ENCODE measurements at regions of chr17 and their contacts with region 1.

Region 1: DNA sequence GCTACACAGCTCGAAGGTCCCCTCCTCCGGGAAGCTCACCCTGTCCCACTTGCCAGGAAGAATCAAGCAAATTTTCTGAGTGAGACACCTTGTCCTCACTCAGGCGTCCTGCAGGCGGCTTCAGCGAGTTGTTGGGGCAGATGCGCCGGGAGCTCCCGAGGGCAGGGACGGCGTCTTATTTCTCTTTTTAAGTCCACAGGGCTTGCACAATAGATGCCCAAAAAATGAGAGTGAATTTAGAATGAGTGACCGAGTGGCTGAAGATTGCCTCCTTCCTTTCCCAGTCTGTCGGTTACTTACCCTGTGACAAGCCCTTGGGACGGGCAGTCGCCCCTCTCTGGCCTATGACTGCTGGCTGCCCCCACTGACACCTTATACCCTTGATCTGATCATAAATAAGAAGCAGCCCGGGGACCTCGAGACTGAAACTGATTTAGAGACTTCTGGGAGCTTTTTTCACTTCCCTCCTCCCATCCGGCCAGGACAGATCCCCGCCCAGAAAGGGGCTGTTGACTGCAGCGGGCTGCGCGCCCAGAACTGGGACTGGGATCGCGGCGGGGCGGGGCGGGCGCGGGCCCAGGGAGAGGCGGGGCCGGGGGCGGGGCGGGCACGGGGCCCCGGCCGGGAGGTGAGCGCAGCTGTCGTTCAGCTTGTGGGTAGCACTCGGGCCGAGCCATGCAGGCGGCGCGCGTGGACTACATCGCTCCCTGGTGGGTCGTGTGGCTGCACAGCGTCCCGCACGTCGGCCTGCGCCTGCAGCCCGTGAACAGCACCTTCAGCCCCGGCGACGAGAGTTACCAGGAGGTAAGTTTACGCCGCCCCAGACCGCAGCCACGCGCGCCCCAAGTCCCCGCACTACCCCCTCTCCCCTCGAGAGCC is at the start of gene TTYH2:
- DNase-seq: peak; percentile 90 to 94
- H3K4me3 ChIP-seq: peak within 1 kb of the TSS in 2 of 3 donors; percentile 50 to 70
- H3K27ac ChIP-seq: peak within 1 kb of the TSS; percentile 61 to 81 (median 74)
- H3K4me1 ChIP-seq: peaks cover 30 to 59% of the 10 kb centered on the region in 2 donors
- H3K27me3 ChIP-seq: no peaks in the 10 kb centered on the region
- CTCF ChIP-seq: peak in 3 of 6 experiments; percentile 21 to 35 (median 26)
- POLR2A ChIP-seq: peak; percentile 8 to 71
- total RNA-seq, gene TTYH2: 12.4 to 24.7 (median 18.8) TPM

Region 2: DNA sequence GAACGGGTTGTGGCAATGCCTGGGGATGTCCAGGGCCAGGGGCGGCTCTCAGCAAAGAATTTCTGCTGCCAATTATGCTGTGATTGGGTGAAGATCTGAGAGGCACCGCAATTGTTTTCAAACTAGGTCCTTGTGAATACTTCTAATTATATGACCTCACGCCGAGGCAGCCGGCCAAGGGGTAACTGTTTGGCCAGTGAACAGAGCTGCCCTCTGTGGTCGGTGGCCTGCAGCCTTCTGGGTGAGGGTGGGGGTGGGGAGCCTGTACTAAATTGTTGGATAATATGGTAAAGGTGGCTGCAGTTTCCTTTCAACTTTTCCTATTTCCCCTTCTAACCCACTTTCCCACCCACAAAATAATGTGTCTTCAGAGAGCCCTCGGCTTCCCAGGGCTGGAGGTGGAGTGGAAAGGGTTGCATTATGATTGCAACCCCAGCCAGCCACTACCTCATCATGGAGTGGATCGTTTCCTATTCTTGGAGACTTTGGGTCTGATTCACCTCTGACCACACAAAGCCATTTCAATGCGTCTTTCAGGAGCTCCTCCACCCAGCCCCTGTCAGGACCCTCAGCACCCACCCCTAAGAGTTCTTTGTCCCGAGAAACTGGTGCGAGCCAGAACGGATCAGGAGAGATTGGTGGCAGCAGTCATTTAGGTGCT is 58.9 kb after region 1 on chr17:
- intact Hi-C with region 1: loop called (anchors 2 kb)
- DNase-seq: peak; percentile 93 to 94
- H3K4me3 ChIP-seq: no peak overlapping the region
- H3K27ac ChIP-seq: no peak overlapping the region
- H3K4me1 ChIP-seq: peaks cover 14 to 54% of the 10 kb centered on the region in 2 donors
- H3K27me3 ChIP-seq: no peaks in the 10 kb centered on the region
- CTCF ChIP-seq: no peak
- POLR2A ChIP-seq: no peak

Region 3: DNA sequence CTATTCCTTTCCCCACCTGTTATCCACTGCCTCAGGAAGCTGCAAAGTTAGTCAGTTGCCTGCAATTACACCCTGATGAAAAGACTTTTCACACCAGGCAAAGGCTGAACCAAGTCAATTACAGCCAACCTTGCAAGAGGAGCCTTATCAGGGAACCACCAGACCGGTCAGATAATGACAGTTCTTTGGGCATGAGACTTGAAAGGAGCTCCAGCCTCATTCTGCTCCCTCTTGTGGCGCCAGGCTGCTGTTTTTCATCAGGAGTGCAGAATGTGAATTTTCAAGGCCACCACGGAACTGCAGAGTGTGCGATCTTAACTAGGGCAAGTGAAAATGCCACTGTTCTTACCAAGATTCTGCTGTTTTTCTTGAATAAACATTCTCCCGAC is 83.4 kb after region 1 on chr17:
- intact Hi-C with region 1: loop called (anchors 5 kb)
- DNase-seq: peak; percentile 88 to 89
- H3K4me3 ChIP-seq: no peak overlapping the region
- H3K27ac ChIP-seq: peak overlapping the region; percentile 26 to 85 (median 76)
- H3K4me1 ChIP-seq: peaks cover 30 to 45% of the 10 kb centered on the region in 2 donors
- H3K27me3 ChIP-seq: no peaks in the 10 kb centered on the region
- CTCF ChIP-seq: peak; percentile 22 to 77 (median 65)
- POLR2A ChIP-seq: no peak

Region 4: GRCh38 chr17:74454199-74455024 is 241.3 kb after region 1 on chr17:
- intact Hi-C with region 1: loop called (anchors 5 kb)
- DNase-seq: peak; percentile 95
- H3K4me3 ChIP-seq: peak overlapping the region in 1 of 3 donors; percentile 33
- H3K27ac ChIP-seq: peak overlapping the region; percentile 53 to 92 (median 77)
- H3K4me1 ChIP-seq: peaks cover 17 to 57% of the 10 kb centered on the region in 2 donors
- H3K27me3 ChIP-seq: no peaks in the 10 kb centered on the region
- CTCF ChIP-seq: peak in 3 of 6 experiments; percentile 20 to 44 (median 40)
- POLR2A ChIP-seq: peak in 1 of 2 donors; percentile 80